GM12878 (cell line): ENCODE measurements at regions of chr10 and their contacts with region 1.

Region 1: DNA sequence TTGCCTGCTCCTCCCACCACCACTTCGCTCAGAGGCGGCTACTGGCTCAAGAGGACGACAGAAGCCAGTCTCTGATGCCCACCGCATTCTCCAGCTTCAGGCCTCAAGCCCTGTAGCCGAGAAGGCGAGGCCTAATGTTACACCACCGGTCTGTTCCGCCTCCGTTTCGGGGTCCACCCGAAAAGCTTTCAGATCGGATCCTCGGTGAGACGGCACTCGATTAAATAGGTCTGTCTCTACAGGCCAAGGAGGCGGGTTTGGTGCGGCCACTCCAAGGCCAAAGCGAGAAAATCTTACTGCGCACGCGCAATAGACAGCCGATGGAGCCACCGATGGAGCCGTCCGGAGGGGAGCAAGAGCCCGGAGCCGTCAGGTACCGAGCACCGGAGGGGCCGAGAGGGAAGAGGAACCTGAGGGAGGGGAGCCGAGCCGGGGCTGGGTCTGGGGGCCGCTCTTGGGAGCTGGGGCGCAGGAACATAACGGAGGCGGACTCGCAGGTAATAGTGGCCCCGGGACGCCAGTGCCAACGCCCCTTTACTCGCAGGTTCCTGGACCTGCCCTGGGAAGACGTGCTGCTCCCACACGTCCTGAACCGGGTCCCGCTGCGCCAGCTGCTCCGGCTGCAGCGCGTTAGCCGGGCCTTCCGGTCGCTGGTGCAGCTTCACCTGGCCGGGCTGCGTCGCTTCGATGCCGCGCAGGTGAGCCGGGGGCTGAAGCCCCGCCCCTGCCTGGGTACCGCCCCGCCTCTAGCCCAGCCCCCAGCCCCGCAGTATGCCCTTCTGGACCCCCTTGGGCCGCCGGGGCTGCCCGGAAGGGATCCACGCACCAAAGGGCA is at the start of gene FBXL15:
- DNase-seq: peak; percentile 89
- ATAC-seq: peak; percentile 77
- H3K4me3 ChIP-seq: peak within 1 kb of the TSS; percentile 98
- H3K27ac ChIP-seq: peak within 1 kb of the TSS; percentile 85
- H3K4me1 ChIP-seq: peaks cover 18% of the 10 kb centered on the region
- H3K27me3 ChIP-seq: no peaks in the 10 kb centered on the region; a peak in 1 of 4 replicates
- CTCF ChIP-seq: no peak
- EP300 ChIP-seq: no peak
- POLR2A ChIP-seq: peak; percentile 79
- RAD21 ChIP-seq: no peak
- polyA plus RNA-seq, gene FBXL15: 0.13 to 0.66 TPM

Region 2: GRCh38 chr10:101367569-101368453 is 1053.2 kb before region 1 on chr10:
- CTCF ChIA-PET with region 1: no interaction called
- POLR2A ChIA-PET with region 1: no interaction called
- RAD21 ChIA-PET with region 1: no interaction called
- SMC1A ChIA-PET with region 1: no interaction called
- in situ Hi-C with region 1: no loop called
- intact Hi-C with region 1: no loop called
- DNase-seq: no peak
- ATAC-seq: no peak
- H3K4me3 ChIP-seq: no peak overlapping the region
- H3K27ac ChIP-seq: no peak overlapping the region
- H3K4me1 ChIP-seq: no peaks in the 10 kb centered on the region
- H3K27me3 ChIP-seq: no peaks in the 10 kb centered on the region
- CTCF ChIP-seq: no peak
- EP300 ChIP-seq: no peak
- POLR2A ChIP-seq: no peak
- RAD21 ChIP-seq: no peak

Region 3: GRCh38 chr10:102399217-102400089 is 21.6 kb before region 1 on chr10:
- CTCF ChIA-PET with region 1: interaction called, 90 read pairs
- POLR2A ChIA-PET with region 1: interaction called, 35 read pairs
- RAD21 ChIA-PET with region 1: interaction called, 10 read pairs
- SMC1A ChIA-PET with region 1: interaction called, 23 read pairs
- in situ Hi-C with region 1: no loop called
- intact Hi-C with region 1: loop called (anchors 1 kb)
- DNase-seq: peak; percentile 56
- ATAC-seq: peak; percentile 66
- H3K4me3 ChIP-seq: peak overlapping the region; percentile 67
- H3K27ac ChIP-seq: peak overlapping the region; percentile 37
- H3K4me1 ChIP-seq: peaks cover 20% of the 10 kb centered on the region
- H3K27me3 ChIP-seq: no peaks in the 10 kb centered on the region
- CTCF ChIP-seq: peak; percentile 88 to 94 (median 88)
- EP300 ChIP-seq: no peak
- POLR2A ChIP-seq: peak; percentile 86
- RAD21 ChIP-seq: peak; percentile 61

Region 4: GRCh38 chr10:102461187-102462054 is 40.4 kb after region 1 on chr10:
- CTCF ChIA-PET with region 1: interaction called, 29 read pairs
- POLR2A ChIA-PET with region 1: interaction called, 3 read pairs
- RAD21 ChIA-PET with region 1: interaction called, 5 read pairs
- SMC1A ChIA-PET with region 1: interaction called, 3 read pairs
- in situ Hi-C with region 1: no loop called
- intact Hi-C with region 1: no loop called
- DNase-seq: peak; percentile 43
- ATAC-seq: peak; percentile 96
- H3K4me3 ChIP-seq: peak overlapping the region; percentile 73
- H3K27ac ChIP-seq: no peak overlapping the region
- H3K4me1 ChIP-seq: peaks cover 16% of the 10 kb centered on the region
- H3K27me3 ChIP-seq: no peaks in the 10 kb centered on the region
- CTCF ChIP-seq: no peak
- EP300 ChIP-seq: no peak
- POLR2A ChIP-seq: peak; percentile 53
- RAD21 ChIP-seq: no peak